ENCODE measurements at regions of chr19 and their contacts with region 1.

Region 1: GRCh38 chr19:33176670-33177416 is 17.3 kb upstream of the LRP3 start:
- DNase-seq: peak; percentile 95 to 99 (median 98)
- H3K4me3 ChIP-seq: peak overlapping the region; percentile 71 to 76
- H3K4me3 Mint-ChIP-seq: peak overlapping the region; percentile 95 to 99 (median 98)
- H3K27ac ChIP-seq: peak overlapping the region; percentile 88
- H3K27ac Mint-ChIP-seq: peak overlapping the region; percentile 97 to 100 (median 99)
- H3K4me1 ChIP-seq: peaks cover 41% of the 10 kb centered on the region
- H3K4me1 Mint-ChIP-seq: peaks cover 23 to 60% (median 42%) of the 10 kb centered on the region in 4 donors
- H3K27me3 ChIP-seq: no peaks in the 10 kb centered on the region
- H3K27me3 Mint-ChIP-seq: peaks cover 0 to 4% of the 10 kb centered on the region in 2 donors

Region 2: GRCh38 chr19:32674959-32675719 is 501.7 kb before region 1 on chr19 and contains the start of gene ANKRD27:
- CTCF ChIA-PET with region 1: no interaction called
- POLR2A ChIA-PET with region 1: no interaction called
- intact Hi-C with region 1: loop called (anchors 2 kb)
- DNase-seq: peak; percentile 97 to 99 (median 98)
- H3K4me3 ChIP-seq: peak within 1 kb of the TSS; percentile 75 to 81
- H3K4me3 Mint-ChIP-seq: peak within 1 kb of the TSS; percentile 91 to 98 (median 96)
- H3K27ac ChIP-seq: peak within 1 kb of the TSS; percentile 68
- H3K27ac Mint-ChIP-seq: peak within 1 kb of the TSS; percentile 77 to 95 (median 91)
- H3K4me1 ChIP-seq: peaks cover 45% of the 10 kb centered on the region
- H3K4me1 Mint-ChIP-seq: peaks cover 21 to 52% (median 35%) of the 10 kb centered on the region in 4 donors
- H3K27me3 ChIP-seq: no peaks in the 10 kb centered on the region
- H3K27me3 Mint-ChIP-seq: peaks cover 6 to 7% of the 10 kb centered on the region in 2 donors
- total RNA-seq, gene ANKRD27: 49.6 to 51.2 TPM

Region 3: GRCh38 chr19:32971715-32972540 is 204.9 kb before region 1 on chr19 and contains the starts of genes CEP89 and FAAP24:
- CTCF ChIA-PET with region 1: interaction called, 6 read pairs
- POLR2A ChIA-PET with region 1: interaction called, 15 read pairs
- intact Hi-C with region 1: loop called (anchors 1 kb)
- DNase-seq: peak; percentile 99
- H3K4me3 ChIP-seq: peak within 1 kb of the TSS; percentile 62 to 79
- H3K4me3 Mint-ChIP-seq: peak within 1 kb of the TSS; percentile 99 to 100 (median 99)
- H3K27ac ChIP-seq: peak within 1 kb of the TSS; percentile 65
- H3K27ac Mint-ChIP-seq: peak within 1 kb of the TSS; percentile 92 to 98 (median 97)
- H3K4me1 ChIP-seq: peaks cover 10% of the 10 kb centered on the region
- H3K4me1 Mint-ChIP-seq: peaks cover 14 to 29% (median 20%) of the 10 kb centered on the region in 4 donors
- H3K27me3 ChIP-seq: no peaks in the 10 kb centered on the region
- H3K27me3 Mint-ChIP-seq: no peaks in the 10 kb centered on the region
- total RNA-seq, gene CEP89: 20.2 to 20.6 TPM
- total RNA-seq, gene FAAP24: 1.3 to 1.8 TPM

Region 4: DNA sequence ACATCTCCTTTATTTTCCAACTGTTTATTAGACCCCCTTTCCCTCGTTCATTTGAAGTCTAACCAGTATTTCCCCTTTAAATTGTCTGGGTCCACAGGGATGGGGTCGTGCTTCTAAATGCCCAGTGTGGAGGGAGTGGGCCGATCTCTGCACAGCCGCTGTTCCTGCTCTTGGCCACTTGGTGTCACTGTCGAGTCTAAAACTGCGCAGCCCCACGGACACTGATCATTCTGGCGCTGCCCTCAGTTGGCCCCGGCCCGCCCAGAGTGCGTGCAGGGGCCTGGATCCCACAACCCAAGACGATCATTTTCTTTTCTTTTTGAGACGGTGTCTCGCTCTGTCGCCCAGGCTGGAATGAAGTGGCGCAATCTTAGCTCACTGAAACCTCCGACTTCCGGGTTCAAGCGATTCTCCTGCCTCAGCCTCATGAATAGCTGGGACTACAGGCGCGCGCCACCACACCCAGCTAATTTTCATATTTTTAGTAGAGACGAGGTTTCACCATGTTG is 32.9 kb before region 1 on chr19:
- CTCF ChIA-PET with region 1: interaction called, 26 read pairs
- POLR2A ChIA-PET with region 1: interaction called, 12 read pairs
- intact Hi-C with region 1: loop called (anchors 1 kb)
- DNase-seq: peak; percentile 54 to 66 (median 56)
- H3K4me3 ChIP-seq: no peak overlapping the region
- H3K4me3 Mint-ChIP-seq: peak overlapping the region in 6 of 8 donors; percentile 7 to 64 (median 33)
- H3K27ac ChIP-seq: no peak overlapping the region
- H3K27ac Mint-ChIP-seq: peak overlapping the region in 1 of 7 donors; percentile 31
- H3K4me1 ChIP-seq: peaks cover 6% of the 10 kb centered on the region
- H3K4me1 Mint-ChIP-seq: peaks cover 3 to 6% (median 5%) of the 10 kb centered on the region in 4 donors
- H3K27me3 ChIP-seq: no peaks in the 10 kb centered on the region
- H3K27me3 Mint-ChIP-seq: peaks cover 4 to 7% of the 10 kb centered on the region in 2 donors

Region 5: GRCh38 chr19:33163481-33163880 is 13.4 kb before region 1 on chr19:
- CTCF ChIA-PET with region 1: interaction called, 43 read pairs
- POLR2A ChIA-PET with region 1: interaction called, 160 read pairs
- intact Hi-C with region 1: loop called (anchors 1 kb)
- DNase-seq: no peak
- H3K4me3 ChIP-seq: no peak overlapping the region
- H3K4me3 Mint-ChIP-seq: no peak overlapping the region
- H3K27ac ChIP-seq: no peak overlapping the region
- H3K27ac Mint-ChIP-seq: no peak overlapping the region
- H3K4me1 ChIP-seq: peaks cover 24% of the 10 kb centered on the region
- H3K4me1 Mint-ChIP-seq: peaks cover 19 to 35% (median 26%) of the 10 kb centered on the region in 4 donors
- H3K27me3 ChIP-seq: no peaks in the 10 kb centered on the region
- H3K27me3 Mint-ChIP-seq: no peaks in the 10 kb centered on the region

Region 6: GRCh38 chr19:33373701-33374421 is 197.0 kb after region 1 on chr19 and contains the start of gene CEBPG:
- CTCF ChIA-PET with region 1: interaction called, 13 read pairs
- POLR2A ChIA-PET with region 1: interaction called, 29 read pairs
- intact Hi-C with region 1: loop called (anchors 1 kb)
- DNase-seq: peak in 1 of 5 donors; percentile 73
- H3K4me3 ChIP-seq: peak within 1 kb of the TSS; percentile 66 to 81
- H3K4me3 Mint-ChIP-seq: peak within 1 kb of the TSS; percentile 88 to 96 (median 92)
- H3K27ac ChIP-seq: peak within 1 kb of the TSS; percentile 87
- H3K27ac Mint-ChIP-seq: peak within 1 kb of the TSS; percentile 91 to 96 (median 94)
- H3K4me1 ChIP-seq: peaks cover 42% of the 10 kb centered on the region
- H3K4me1 Mint-ChIP-seq: peaks cover 36 to 59% (median 43%) of the 10 kb centered on the region in 4 donors
- H3K27me3 ChIP-seq: no peaks in the 10 kb centered on the region
- H3K27me3 Mint-ChIP-seq: no peaks in the 10 kb centered on the region
- total RNA-seq, gene CEBPG: 26.9 to 27.2 TPM

Region 7: GRCh38 chr19:33569821-33570220 is 393.0 kb after region 1 on chr19:
- CTCF ChIA-PET with region 1: no interaction called
- POLR2A ChIA-PET with region 1: no interaction called
- intact Hi-C with region 1: no loop called
- DNase-seq: no peak
- H3K4me3 ChIP-seq: no peak overlapping the region
- H3K4me3 Mint-ChIP-seq: no peak overlapping the region
- H3K27ac ChIP-seq: no peak overlapping the region
- H3K27ac Mint-ChIP-seq: no peak overlapping the region
- H3K4me1 ChIP-seq: no peaks in the 10 kb centered on the region
- H3K4me1 Mint-ChIP-seq: no peaks in the 10 kb centered on the region
- H3K27me3 ChIP-seq: no peaks in the 10 kb centered on the region
- H3K27me3 Mint-ChIP-seq: peaks cover 18 to 28% of the 10 kb centered on the region in 2 donors

Region 8: GRCh38 chr19:34034318-34034846 is 857.5 kb after region 1 on chr19:
- CTCF ChIA-PET with region 1: no interaction called
- POLR2A ChIA-PET with region 1: no interaction called
- intact Hi-C with region 1: no loop called
- DNase-seq: no peak
- H3K4me3 ChIP-seq: no peak overlapping the region
- H3K4me3 Mint-ChIP-seq: no peak overlapping the region
- H3K27ac ChIP-seq: no peak overlapping the region
- H3K27ac Mint-ChIP-seq: no peak overlapping the region
- H3K4me1 ChIP-seq: no peaks in the 10 kb centered on the region
- H3K4me1 Mint-ChIP-seq: no peaks in the 10 kb centered on the region
- H3K27me3 ChIP-seq: no peaks in the 10 kb centered on the region
- H3K27me3 Mint-ChIP-seq: peaks cover 2 to 19% of the 10 kb centered on the region in 2 donors

Region 9: DNA sequence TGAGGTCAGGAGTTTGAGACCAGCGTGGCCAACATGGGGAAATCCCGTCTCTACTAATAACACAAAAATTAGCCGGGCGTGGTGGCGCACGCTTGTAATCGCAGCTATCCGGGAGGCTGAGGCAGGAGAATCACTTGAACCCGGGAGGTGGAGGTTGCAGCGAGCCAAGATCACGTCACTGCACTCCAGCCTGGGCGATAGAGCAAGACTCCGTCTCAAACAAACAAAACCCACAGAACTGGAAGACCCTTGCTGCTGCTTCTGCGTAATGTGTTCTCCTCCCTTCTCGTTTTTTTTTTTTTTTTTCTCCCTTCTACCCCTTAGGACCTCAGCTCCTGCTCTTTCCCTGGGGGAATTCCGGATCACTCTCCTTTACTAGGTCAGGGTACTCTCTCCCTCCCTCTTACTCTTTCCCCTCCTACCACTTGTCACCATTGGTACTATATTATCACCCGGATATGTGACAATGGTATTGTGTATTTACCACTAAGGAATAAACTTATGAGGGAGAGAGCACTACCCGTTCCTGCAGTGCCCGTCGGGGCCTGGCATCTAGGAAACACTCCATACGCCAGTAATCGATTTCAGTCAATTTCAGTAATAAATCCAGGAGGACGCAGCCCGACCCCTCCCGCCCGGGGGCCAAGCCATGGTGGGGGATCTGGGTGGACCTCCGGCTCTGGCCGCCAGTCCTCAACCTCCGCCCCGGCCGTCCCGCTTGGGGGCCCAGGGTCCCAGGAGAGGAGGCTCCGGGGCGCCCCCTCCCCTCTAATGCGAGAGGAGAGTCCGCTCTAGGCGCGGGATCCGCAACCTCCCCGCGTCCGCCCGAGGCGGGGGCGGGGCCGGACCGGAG is 1077.1 kb after region 1 on chr19:
- CTCF ChIA-PET with region 1: no interaction called
- POLR2A ChIA-PET with region 1: no interaction called
- intact Hi-C with region 1: loop called (anchors 2 kb)
- DNase-seq: peak in 3 of 5 donors; percentile 80 to 85 (median 82)
- H3K4me3 ChIP-seq: peak overlapping the region; percentile 67 to 75
- H3K4me3 Mint-ChIP-seq: peak overlapping the region; percentile 96 to 100 (median 98)
- H3K27ac ChIP-seq: peak overlapping the region; percentile 90
- H3K27ac Mint-ChIP-seq: peak overlapping the region; percentile 81 to 100 (median 99)
- H3K4me1 ChIP-seq: peaks cover 32% of the 10 kb centered on the region
- H3K4me1 Mint-ChIP-seq: peaks cover 17 to 42% (median 32%) of the 10 kb centered on the region in 4 donors
- H3K27me3 ChIP-seq: no peaks in the 10 kb centered on the region
- H3K27me3 Mint-ChIP-seq: no peaks in the 10 kb centered on the region